Panc1 (cell line): ENCODE measurements at regions of chr14 and their contacts with region 1.

Region 1: GRCh38 chr14:82251431-82251830 is 717.8 kb upstream of the SEL1L start:
- DNase-seq: no peak
- ATAC-seq: no peak
- H3K4me3 ChIP-seq: no peak overlapping the region
- H3K27ac ChIP-seq: no peak overlapping the region
- H3K4me1 ChIP-seq: no peaks in the 10 kb centered on the region
- H3K27me3 ChIP-seq: no peaks in the 10 kb centered on the region
- CTCF ChIP-seq: no peak

Region 2: DNA sequence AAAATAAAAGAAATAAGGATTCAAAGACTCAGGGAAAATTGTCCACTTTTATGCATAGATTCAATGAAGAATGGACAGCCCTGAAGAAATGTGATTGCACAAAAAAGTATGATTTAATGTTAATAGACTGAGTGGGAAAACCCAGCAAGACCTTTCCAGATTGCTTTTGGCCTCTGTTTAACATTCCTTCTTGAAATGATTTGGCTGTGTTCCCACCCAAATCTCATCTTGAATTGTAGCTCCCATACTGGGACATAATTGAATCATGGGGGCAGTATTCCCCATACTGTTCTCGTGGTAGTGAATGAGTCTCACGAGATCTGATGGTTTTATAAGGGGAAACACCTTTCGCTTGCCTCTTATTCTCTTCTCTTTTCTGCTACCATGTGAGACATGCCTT is 599.1 kb after region 1 on chr14:
- CTCF ChIA-PET with region 1: no interaction called
- POLR2A ChIA-PET with region 1: interaction called, 10 read pairs
- in situ Hi-C with region 1: no loop called
- intact Hi-C with region 1: no loop called
- DNase-seq: no peak
- ATAC-seq: no peak
- H3K4me3 ChIP-seq: no peak overlapping the region
- H3K27ac ChIP-seq: no peak overlapping the region
- H3K4me1 ChIP-seq: no peaks in the 10 kb centered on the region
- H3K27me3 ChIP-seq: no peaks in the 10 kb centered on the region
- CTCF ChIP-seq: no peak